SK-N-SH (cell line): ENCODE measurements at regions of chr2 and their contacts with region 1.

Region 1: DNA sequence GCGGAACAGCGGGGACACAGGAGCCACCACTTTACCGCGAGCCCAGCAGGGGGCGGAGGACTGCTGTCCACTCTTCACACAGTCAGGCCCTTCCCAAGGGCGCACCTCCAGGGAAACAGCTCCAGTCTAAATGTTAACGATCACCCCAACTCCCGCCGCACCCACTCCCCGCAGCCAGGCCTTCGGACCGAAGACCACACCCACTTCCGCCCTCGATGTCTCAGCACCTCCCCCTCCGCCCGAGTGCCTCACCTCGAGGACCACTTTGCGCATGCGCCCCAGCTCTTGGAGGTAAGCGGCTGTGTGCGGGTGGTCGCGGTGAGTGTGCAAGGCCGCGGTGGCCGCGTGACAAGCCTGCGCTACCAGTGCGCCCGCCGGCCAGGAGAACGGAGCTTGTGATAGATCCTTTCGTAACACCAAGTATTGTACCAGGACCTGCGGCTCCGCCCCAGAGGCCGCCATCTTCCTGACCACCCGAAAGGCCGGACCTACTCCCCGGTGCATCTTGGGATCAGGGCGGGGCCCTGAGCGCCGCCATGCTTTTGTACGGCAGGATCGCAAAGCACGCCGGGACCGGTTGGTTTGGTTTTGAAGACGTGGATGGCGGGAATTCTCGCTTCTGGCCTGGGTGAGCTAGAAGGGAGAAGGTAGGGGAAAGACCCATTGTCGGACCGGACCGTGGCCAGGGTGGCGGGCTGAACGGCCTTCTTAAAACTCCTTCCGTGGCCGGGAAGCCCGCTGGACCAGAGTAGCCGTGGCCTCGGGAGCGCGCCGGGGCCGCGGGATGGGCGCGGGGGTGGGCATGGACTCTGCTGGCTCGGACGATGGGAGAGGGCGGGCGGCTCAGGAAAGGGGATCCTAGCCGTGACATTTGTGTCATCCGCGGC is at the starts of genes CENPO and PTRHD1:
- DNase-seq: peak; percentile 99
- H3K4me3 ChIP-seq: peak within 1 kb of the TSS; percentile 89 to 93
- H3K27ac ChIP-seq: peak within 1 kb of the TSS; percentile 94 to 100
- H3K4me1 ChIP-seq: peaks cover 18 to 19% of the 10 kb centered on the region in 2 experiments; a peak in 3 of 4 replicates
- H3K27me3 ChIP-seq: no peaks in the 10 kb centered on the region
- CTCF ChIP-seq: peak; percentile 70
- EP300 ChIP-seq: no peak; a peak in 2 of 4 replicates
- RAD21 ChIP-seq: peak; percentile 59
- polyA plus RNA-seq, gene CENPO: 18.3 and 22.5 TPM in 2 replicates
- polyA plus RNA-seq, gene PTRHD1: 65.6 and 74.4 TPM in 2 replicates

Region 2: GRCh38 chr2:24421668-24422067 is 371.4 kb before region 1 on chr2:
- CTCF ChIA-PET with region 1: interaction called, 13 read pairs
- POLR2A ChIA-PET with region 1: interaction called, 4 read pairs
- DNase-seq: peak; percentile 60
- H3K4me3 ChIP-seq: no peak overlapping the region
- H3K27ac ChIP-seq: no peak overlapping the region
- H3K4me1 ChIP-seq: peaks cover 0 to 2% of the 10 kb centered on the region in 2 experiments; a peak in 1 of 4 replicates
- H3K27me3 ChIP-seq: no peaks in the 10 kb centered on the region
- CTCF ChIP-seq: peak; percentile 58
- EP300 ChIP-seq: no peak
- RAD21 ChIP-seq: peak; percentile 88

Region 3: DNA sequence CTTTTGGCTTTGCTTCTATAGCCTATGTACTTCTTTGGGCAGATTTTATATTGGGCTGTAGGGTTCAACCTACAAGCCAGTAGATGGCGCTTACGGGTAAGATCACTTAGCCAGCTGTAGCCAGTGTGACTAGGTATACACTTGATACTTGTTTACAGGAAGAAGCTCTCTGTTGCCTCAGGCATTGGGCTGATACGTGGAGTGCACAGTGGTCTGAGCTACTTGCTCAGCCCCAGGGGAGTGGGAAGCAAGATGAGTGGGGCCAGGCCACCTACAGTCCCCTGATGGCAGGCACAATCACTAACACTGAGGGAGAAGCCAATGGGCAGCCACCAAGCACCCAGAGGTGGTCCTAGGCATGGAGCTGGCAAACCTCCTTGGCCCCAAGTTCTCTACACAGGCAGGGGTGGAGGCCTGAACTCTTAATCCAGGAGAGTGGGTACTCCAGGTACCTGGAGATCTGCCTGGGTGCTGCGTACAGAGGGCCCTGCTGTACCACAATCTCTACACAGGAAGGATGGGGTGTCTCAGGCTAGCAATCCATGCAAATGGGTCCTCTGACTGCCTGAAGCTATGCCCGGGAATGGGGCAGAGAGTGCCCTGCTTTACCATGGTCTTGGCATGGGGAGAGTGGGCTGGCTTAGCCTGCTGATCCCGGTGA is 179.8 kb before region 1 on chr2:
- CTCF ChIA-PET with region 1: no interaction called
- POLR2A ChIA-PET with region 1: no interaction called
- DNase-seq: no peak
- H3K4me3 ChIP-seq: no peak overlapping the region
- H3K27ac ChIP-seq: no peak overlapping the region
- H3K4me1 ChIP-seq: peaks cover 0 to 12% of the 10 kb centered on the region in 2 experiments; a peak in 3 of 4 replicates
- H3K27me3 ChIP-seq: no peaks in the 10 kb centered on the region
- CTCF ChIP-seq: peak; percentile 46
- EP300 ChIP-seq: no peak
- RAD21 ChIP-seq: peak; percentile 36; the same call in 1 of the 2 replicates

Region 4: DNA sequence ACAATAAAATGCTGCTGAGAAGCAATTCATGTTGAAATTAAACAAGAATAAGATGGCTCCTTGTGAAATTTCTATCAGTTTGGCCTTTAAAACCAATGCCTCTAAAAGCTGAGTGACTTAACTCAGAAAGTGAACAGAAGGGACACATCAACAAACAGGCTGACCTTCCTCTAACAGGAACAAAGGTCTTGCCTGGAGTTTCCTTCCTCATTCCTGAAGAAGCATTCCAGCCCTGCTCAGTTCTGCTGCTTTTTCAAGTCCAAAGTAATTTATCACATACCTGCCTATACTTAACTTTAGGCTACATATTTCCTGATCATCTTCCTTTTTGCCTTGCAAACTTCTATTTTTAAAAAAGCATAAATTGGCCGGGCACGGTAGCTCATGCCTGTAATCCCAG is 14.0 kb before region 1 on chr2:
- CTCF ChIA-PET with region 1: interaction called, 28 read pairs
- POLR2A ChIA-PET with region 1: interaction called, 9 read pairs
- DNase-seq: no peak
- H3K4me3 ChIP-seq: no peak overlapping the region
- H3K27ac ChIP-seq: no peak overlapping the region
- H3K4me1 ChIP-seq: no peaks in the 10 kb centered on the region
- H3K27me3 ChIP-seq: no peaks in the 10 kb centered on the region
- CTCF ChIP-seq: no peak
- EP300 ChIP-seq: no peak
- RAD21 ChIP-seq: no peak

Region 5: GRCh38 chr2:24816884-24817283 is 23.8 kb after region 1 on chr2:
- CTCF ChIA-PET with region 1: interaction called, 16 read pairs
- POLR2A ChIA-PET with region 1: interaction called, 3 read pairs
- DNase-seq: peak; percentile 21
- H3K4me3 ChIP-seq: no peak overlapping the region
- H3K27ac ChIP-seq: peak overlapping the region in 1 of 2 experiments; percentile 71; a peak in 3 of 4 replicates
- H3K4me1 ChIP-seq: peaks cover 4 to 15% of the 10 kb centered on the region in 2 experiments; a peak in 2 of 4 replicates
- H3K27me3 ChIP-seq: no peaks in the 10 kb centered on the region
- CTCF ChIP-seq: no peak
- EP300 ChIP-seq: no peak; a peak in 1 of 4 replicates
- RAD21 ChIP-seq: no peak